Ascending aorta (tissue), 2 donors: ENCODE measurements at regions of chr4 and their contacts with region 1.

Region 1: DNA sequence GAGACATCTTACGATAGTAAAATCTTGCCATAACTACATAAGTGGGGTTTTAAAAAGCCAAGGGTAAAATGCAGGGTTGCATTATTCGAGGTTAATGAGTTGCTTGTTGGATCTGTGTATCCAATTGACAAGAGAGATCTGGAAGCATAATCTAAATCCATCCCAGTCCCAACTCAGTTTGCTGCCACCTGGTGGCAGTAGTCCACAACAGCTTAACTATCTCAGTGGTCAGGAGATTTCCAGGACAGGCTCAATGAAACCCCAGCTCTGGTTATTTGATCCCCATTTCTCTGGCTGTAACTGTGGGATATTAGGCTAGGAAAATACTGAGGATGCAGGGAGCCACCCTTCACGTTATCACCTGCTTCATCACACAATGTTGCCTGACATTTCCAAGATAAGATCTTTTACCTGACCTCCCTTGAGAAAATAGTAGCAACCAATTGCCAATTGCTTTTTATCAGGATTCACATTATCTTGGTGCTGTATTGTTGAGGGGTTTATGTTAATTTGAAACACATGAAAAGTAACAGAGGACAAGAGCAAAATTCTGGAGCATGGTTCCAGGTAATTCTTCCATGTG is 88.2 kb upstream of the TNIP3 start:
- DNase-seq: peak in 1 of 2 donors; percentile 71
- H3K4me3 ChIP-seq: no peak overlapping the region
- H3K27ac ChIP-seq: no peak overlapping the region
- H3K4me1 ChIP-seq: no peaks in the 10 kb centered on the region
- H3K27me3 ChIP-seq: no peaks in the 10 kb centered on the region
- CTCF ChIP-seq: peak; percentile 42 to 72 (median 70)

Region 2: DNA sequence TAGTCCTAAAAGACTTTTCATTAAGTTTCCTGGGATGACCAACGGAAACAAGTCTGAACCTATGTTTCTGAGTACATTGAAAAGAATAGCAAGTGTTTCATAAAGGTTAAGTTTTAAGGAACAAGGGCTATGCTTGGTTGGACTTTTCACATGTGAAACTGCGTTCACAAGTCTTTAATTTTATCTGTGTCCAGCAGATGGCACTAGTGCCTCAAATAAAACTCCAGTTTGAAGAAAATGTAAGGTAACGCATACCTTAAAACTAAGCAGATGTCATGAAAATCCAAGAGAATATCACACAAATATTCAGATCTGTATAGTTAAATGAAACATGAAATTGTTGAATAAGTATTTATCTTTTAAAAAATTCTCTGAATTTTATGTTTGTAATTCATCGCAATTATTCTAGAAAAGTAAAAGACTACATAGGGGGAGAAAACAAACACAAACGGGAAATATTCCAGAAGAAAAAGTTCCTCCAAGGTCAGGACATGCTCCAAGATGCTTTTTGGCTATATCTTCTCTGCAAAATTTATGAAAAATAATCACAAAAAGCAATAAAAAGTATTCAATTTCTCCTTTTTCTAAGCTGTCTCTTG is 1096.1 kb before region 1 on chr4:
- intact Hi-C with region 1: loop called (anchors 5 kb)
- DNase-seq: no peak
- H3K4me3 ChIP-seq: no peak overlapping the region
- H3K27ac ChIP-seq: no peak overlapping the region
- H3K4me1 ChIP-seq: no peaks in the 10 kb centered on the region
- H3K27me3 ChIP-seq: no peaks in the 10 kb centered on the region
- CTCF ChIP-seq: peak; percentile 30 to 65 (median 46)

Region 3: GRCh38 chr4:120922381-120923206 is 329.7 kb before region 1 on chr4 and contains the start of gene PRDM5:
- intact Hi-C with region 1: no loop called
- DNase-seq: peak in 1 of 2 donors; percentile 69
- H3K4me3 ChIP-seq: peak within 1 kb of the TSS; percentile 69 to 70
- H3K27ac ChIP-seq: peak within 1 kb of the TSS; percentile 94 to 98
- H3K4me1 ChIP-seq: peaks cover 0 to 12% of the 10 kb centered on the region in 2 donors
- H3K27me3 ChIP-seq: no peaks in the 10 kb centered on the region
- CTCF ChIP-seq: peak in 1 of 3 experiments; percentile 14
- total RNA-seq, gene PRDM5: 14.9 TPM

Region 4: DNA sequence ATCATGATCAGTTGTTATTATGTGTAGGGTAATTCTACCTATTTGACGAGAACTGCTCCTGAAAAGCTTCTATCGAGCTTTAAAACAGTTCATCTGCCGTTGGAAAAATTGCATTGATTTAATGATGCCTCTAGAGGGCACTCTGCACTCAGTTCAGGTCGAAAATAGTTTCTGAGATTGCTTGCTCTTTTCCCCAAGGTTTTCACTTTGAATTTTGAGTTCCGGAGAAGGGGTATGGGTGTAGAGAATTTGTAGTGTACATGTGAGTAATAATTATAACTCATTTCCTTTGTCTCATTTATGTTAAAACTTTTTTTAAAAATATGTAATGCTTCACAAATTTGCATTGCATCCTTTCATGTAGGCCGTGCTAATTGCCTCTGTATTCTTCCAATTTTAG is 59.8 kb before region 1 on chr4:
- intact Hi-C with region 1: loop called (anchors 1 kb)
- DNase-seq: no peak
- H3K4me3 ChIP-seq: no peak overlapping the region
- H3K27ac ChIP-seq: no peak overlapping the region
- H3K4me1 ChIP-seq: no peaks in the 10 kb centered on the region
- H3K27me3 ChIP-seq: no peaks in the 10 kb centered on the region
- CTCF ChIP-seq: peak; percentile 16 to 68 (median 58)

Region 5: GRCh38 chr4:121330180-121330665 is 77.9 kb after region 1 on chr4:
- intact Hi-C with region 1: no loop called
- DNase-seq: no peak
- H3K4me3 ChIP-seq: no peak overlapping the region
- H3K27ac ChIP-seq: no peak overlapping the region
- H3K4me1 ChIP-seq: no peaks in the 10 kb centered on the region
- H3K27me3 ChIP-seq: no peaks in the 10 kb centered on the region
- CTCF ChIP-seq: no peak